Activated T-helper 1 cell treated with anti-CD3 and anti-CD28 coated beads, Interleukin-12 subunit alpha, Interleukin-12 subunit beta, Interleukin-2, Interleukin-4 antibody, amounts not matched to agents 30 ng/mL and 10 ng/mL and 1 ng/mL, durations not matched to agents 14 hours and 24 hours and 36 hours (primary cell): ENCODE measurements at regions of chr2 and their contacts with region 1.

Region 1: GRCh38 chr2:24577481-24577880 is 86.4 kb downstream of the NCOA1 start:
- DNase-seq: no peak
- H3K4me3 Mint-ChIP-seq: peak overlapping the region; percentile 69
- H3K27ac Mint-ChIP-seq: peak overlapping the region; percentile 82
- H3K4me1 Mint-ChIP-seq: peaks cover 73% of the 10 kb centered on the region
- H3K27me3 Mint-ChIP-seq: no peaks in the 10 kb centered on the region

Region 2: GRCh38 chr2:23867449-23867848 is 710.0 kb before region 1 on chr2:
- intact Hi-C with region 1: no loop called
- DNase-seq: no peak
- H3K4me3 Mint-ChIP-seq: no peak overlapping the region
- H3K27ac Mint-ChIP-seq: no peak overlapping the region
- H3K4me1 Mint-ChIP-seq: no peaks in the 10 kb centered on the region
- H3K27me3 Mint-ChIP-seq: no peaks in the 10 kb centered on the region

Region 3: GRCh38 chr2:24360050-24360962 is 217.2 kb before region 1 on chr2 and contains the start of gene ITSN2:
- intact Hi-C with region 1: loop called (anchors 5 kb)
- DNase-seq: peak; percentile 81
- H3K4me3 Mint-ChIP-seq: peak within 1 kb of the TSS; percentile 91
- H3K27ac Mint-ChIP-seq: peak within 1 kb of the TSS; percentile 93
- H3K4me1 Mint-ChIP-seq: peaks cover 29% of the 10 kb centered on the region
- H3K27me3 Mint-ChIP-seq: no peaks in the 10 kb centered on the region
- total RNA-seq, gene ITSN2: 52.9 and 57.1 TPM in 2 replicates

Region 4: GRCh38 chr2:24375349-24376087 is 202.0 kb before region 1 on chr2:
- intact Hi-C with region 1: no loop called
- DNase-seq: no peak
- H3K4me3 Mint-ChIP-seq: no peak overlapping the region
- H3K27ac Mint-ChIP-seq: no peak overlapping the region
- H3K4me1 Mint-ChIP-seq: no peaks in the 10 kb centered on the region
- H3K27me3 Mint-ChIP-seq: peaks cover 4% of the 10 kb centered on the region

Region 5: DNA sequence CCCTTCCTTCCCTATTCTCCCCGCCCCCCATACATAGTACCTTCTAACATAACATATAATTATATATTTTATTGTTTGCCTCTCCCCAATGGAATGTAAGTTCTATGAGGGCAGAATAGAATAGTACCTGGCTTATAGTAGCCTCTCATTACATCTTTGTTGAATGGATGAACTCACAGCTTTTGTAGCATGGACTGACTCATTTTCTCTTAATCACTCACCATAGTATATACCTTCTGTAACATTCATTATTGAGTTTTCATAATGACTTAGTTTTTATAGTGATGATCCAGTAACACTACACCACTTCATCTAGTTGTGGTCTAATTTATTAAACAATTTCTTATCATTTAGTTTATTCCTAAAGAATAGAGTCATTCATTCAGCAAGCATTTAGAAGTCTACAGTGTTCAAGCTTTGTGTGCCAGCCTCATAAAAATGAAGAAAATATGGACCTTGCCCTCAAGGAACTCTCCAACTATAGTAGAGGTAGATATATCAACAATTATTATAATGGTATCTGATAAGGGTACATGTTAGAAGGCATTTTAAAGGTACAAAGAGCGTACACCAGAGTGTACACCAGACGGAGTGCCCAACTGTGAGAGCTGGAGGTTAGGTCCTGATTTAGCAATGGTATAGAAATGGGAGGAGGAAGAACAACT is 55.4 kb before region 1 on chr2:
- intact Hi-C with region 1: loop called (anchors 1 kb)
- DNase-seq: no peak
- H3K4me3 Mint-ChIP-seq: peak overlapping the region; percentile 49
- H3K27ac Mint-ChIP-seq: peak overlapping the region; percentile 62
- H3K4me1 Mint-ChIP-seq: peaks cover 31% of the 10 kb centered on the region
- H3K27me3 Mint-ChIP-seq: no peaks in the 10 kb centered on the region

Region 6: GRCh38 chr2:24635181-24635580 is 57.7 kb after region 1 on chr2:
- intact Hi-C with region 1: no loop called
- DNase-seq: no peak
- H3K4me3 Mint-ChIP-seq: no peak overlapping the region
- H3K27ac Mint-ChIP-seq: no peak overlapping the region
- H3K4me1 Mint-ChIP-seq: no peaks in the 10 kb centered on the region
- H3K27me3 Mint-ChIP-seq: no peaks in the 10 kb centered on the region

Region 7: DNA sequence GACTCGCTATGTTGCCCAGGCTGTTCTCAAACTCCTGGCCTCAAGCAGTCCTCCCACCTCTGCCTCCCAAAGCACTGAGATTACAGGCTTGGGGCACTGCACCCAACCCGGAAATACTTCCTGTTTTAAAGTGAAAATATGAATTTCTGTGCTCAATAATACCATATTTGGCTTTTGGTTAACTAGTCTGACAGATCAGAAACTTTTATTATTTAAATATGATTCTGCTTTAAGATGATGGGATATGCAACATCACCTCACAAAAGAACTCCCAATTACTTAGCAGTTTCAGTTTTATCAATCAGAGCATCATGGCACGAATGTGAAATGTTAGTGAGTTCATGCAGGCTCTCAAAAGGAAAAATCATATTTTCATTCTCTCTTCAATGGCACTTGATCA is 95.1 kb after region 1 on chr2:
- intact Hi-C with region 1: no loop called
- DNase-seq: no peak
- H3K4me3 Mint-ChIP-seq: no peak overlapping the region
- H3K27ac Mint-ChIP-seq: no peak overlapping the region
- H3K4me1 Mint-ChIP-seq: peaks cover 6% of the 10 kb centered on the region
- H3K27me3 Mint-ChIP-seq: no peaks in the 10 kb centered on the region

Region 8: GRCh38 chr2:24702800-24703199 is 125.3 kb after region 1 on chr2:
- intact Hi-C with region 1: loop called (anchors 5 kb)
- DNase-seq: no peak
- H3K4me3 Mint-ChIP-seq: no peak overlapping the region
- H3K27ac Mint-ChIP-seq: peak overlapping the region; percentile 4
- H3K4me1 Mint-ChIP-seq: peaks cover 5% of the 10 kb centered on the region
- H3K27me3 Mint-ChIP-seq: no peaks in the 10 kb centered on the region

Region 9: GRCh38 chr2:24827321-24828237 is 250.1 kb after region 1 on chr2:
- intact Hi-C with region 1: loop called (anchors 2 kb)
- DNase-seq: peak; percentile 65
- H3K4me3 Mint-ChIP-seq: no peak overlapping the region
- H3K27ac Mint-ChIP-seq: peak overlapping the region; percentile 86
- H3K4me1 Mint-ChIP-seq: peaks cover 25% of the 10 kb centered on the region
- H3K27me3 Mint-ChIP-seq: no peaks in the 10 kb centered on the region

Region 10: DNA sequence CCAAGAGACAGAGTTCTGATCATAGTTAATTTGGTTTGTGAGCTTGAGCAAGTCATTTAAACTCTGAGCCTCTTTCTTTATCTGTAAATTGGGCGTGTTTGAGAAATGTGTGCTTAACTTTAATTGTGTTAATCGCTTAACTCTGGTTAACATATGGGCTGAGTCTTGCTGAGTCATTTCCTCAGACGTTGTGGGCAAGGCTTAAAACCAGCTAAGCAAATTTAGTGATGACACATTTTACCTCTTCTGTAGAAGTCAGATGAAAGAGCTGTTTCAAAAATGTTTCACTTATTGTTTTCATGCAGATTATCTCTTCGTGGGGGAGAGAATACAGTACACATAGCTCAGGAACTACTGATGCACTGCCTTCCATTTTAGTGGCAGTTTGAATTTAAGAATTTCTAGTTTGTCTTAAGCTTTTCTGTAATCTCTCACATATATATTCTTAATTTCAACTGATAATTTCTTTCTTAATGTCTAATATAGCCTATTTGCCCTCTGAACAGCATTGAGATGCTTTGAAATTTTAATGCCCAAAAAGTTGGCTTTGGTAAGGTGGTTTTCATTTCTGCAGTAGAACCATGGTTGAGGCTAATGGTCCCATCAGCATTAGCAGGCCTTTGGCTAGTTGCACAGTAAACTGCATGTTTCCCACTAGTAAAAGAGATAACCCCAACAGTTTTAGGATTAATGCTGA is 1491.3 kb after region 1 on chr2:
- intact Hi-C with region 1: loop called (anchors 2 kb)
- DNase-seq: peak; percentile 64
- H3K4me3 Mint-ChIP-seq: peak overlapping the region; percentile 27
- H3K27ac Mint-ChIP-seq: peak overlapping the region; percentile 93
- H3K4me1 Mint-ChIP-seq: peaks cover 68% of the 10 kb centered on the region
- H3K27me3 Mint-ChIP-seq: no peaks in the 10 kb centered on the region